ENCODE measurements at regions of chr2 and their contacts with region 1.

Region 1: GRCh38 chr2:234135720-234136221 is 85.3 kb downstream of the SPP2 start:
- DNase-seq: peak; percentile 49 to 86 (median 69)
- H3K4me3 ChIP-seq: no peak overlapping the region
- H3K27ac ChIP-seq: no peak overlapping the region
- H3K4me1 ChIP-seq: no peaks in the 10 kb centered on the region
- H3K27me3 ChIP-seq: peaks cover 3% of the 10 kb centered on the region
- CTCF ChIP-seq: peak; percentile 68 to 89 (median 84)
- POLR2A ChIP-seq: no peak

Region 2: GRCh38 chr2:233745073-233745755 is 390.6 kb before region 1 on chr2:
- intact Hi-C with region 1: no loop called
- DNase-seq: no peak
- H3K4me3 ChIP-seq: no peak overlapping the region
- H3K27ac ChIP-seq: no peak overlapping the region
- H3K4me1 ChIP-seq: no peaks in the 10 kb centered on the region
- H3K27me3 ChIP-seq: no peaks in the 10 kb centered on the region
- CTCF ChIP-seq: no peak
- POLR2A ChIP-seq: no peak

Region 3: DNA sequence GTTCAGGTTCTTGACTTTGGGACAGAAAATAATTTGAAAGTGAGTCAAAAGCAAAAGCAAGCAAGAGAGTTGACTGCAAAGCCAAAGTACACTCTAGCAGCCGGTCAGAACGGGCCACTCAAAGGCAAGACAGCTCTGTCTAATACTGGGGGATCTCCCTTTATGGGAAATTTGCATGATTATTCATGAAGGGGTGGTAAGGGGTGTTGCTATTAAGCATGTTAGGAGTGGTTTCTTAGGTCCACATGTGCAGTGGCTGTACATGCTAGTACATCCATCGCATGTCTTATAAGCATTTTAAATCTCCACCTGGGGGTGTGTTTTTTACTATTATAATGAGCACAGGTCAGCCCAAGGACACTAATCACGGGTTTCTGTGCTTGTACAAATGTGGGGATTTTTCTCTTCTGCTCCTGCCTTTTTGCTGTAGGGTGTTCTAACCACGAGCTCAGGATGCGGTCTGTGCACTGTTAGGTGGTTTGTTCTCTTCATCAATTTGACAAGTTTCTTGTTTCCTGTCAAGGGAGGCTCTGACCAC is 145.4 kb before region 1 on chr2:
- intact Hi-C with region 1: no loop called
- DNase-seq: no peak
- H3K4me3 ChIP-seq: no peak overlapping the region
- H3K27ac ChIP-seq: no peak overlapping the region
- H3K4me1 ChIP-seq: no peaks in the 10 kb centered on the region
- H3K27me3 ChIP-seq: no peaks in the 10 kb centered on the region
- CTCF ChIP-seq: no peak
- POLR2A ChIP-seq: no peak

Region 4: DNA sequence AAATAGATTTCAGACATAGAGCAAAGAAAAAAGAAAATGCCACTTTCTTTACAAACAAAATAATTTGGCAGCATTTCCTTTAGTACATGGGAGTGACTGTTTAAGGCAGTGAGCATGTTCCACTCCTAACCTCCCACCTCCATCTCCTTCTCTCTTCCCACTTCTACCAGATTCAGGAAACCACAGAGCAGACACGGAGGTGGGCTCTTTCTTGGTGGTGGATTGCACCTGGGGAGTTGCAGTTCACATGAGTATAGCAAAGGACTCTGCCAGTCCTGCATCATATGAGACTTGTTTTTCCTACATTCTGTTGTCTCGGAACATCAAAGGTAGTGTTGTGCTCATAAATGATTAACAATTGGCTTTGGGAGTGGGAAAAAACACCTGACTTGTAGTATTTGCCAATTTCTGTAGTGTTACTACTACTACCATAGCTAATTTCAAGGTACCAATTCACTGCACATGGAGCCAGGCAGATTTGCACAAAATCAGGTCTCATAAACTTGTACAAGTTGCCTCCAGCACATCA is 51.9 kb after region 1 on chr2:
- intact Hi-C with region 1: no loop called
- DNase-seq: no peak
- H3K4me3 ChIP-seq: no peak overlapping the region
- H3K27ac ChIP-seq: no peak overlapping the region
- H3K4me1 ChIP-seq: no peaks in the 10 kb centered on the region
- H3K27me3 ChIP-seq: no peaks in the 10 kb centered on the region
- CTCF ChIP-seq: no peak
- POLR2A ChIP-seq: no peak

Region 5: DNA sequence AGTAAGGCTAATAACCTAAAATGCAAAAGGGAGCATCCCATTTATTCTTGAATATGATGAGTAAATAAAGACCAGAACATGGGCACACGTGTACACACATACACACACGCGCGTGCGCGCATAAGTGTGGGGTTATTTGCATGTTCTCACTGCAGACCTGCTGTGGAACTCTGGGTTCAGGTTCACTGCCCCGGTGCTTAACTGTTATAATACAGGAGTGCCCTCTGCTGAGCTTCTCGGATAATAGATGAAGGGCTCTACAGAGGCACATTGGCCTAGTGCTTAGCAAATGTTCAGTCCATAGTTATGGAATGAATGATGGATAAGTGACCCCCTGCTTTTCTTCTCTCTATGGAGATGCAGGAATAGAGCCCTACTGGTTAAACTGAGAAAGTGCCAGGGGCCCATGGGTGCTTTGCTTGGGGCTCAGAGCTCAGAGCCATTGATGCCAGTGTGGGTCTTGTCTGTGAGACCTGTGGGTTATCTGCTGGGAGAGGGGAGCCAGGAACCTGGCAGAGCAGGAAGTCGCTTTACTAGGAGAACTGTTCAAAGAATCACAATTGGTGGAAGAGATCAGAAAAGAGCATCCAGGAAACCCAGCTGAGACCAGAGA is 364.7 kb after region 1 on chr2:
- intact Hi-C with region 1: loop called (anchors 2 to 5 kb)
- DNase-seq: peak; percentile 33 to 78 (median 42)
- H3K4me3 ChIP-seq: no peak overlapping the region
- H3K27ac ChIP-seq: no peak overlapping the region
- H3K4me1 ChIP-seq: no peaks in the 10 kb centered on the region
- H3K27me3 ChIP-seq: peaks cover 8% of the 10 kb centered on the region
- CTCF ChIP-seq: peak; percentile 8 to 65 (median 52)
- POLR2A ChIP-seq: no peak

Region 6: DNA sequence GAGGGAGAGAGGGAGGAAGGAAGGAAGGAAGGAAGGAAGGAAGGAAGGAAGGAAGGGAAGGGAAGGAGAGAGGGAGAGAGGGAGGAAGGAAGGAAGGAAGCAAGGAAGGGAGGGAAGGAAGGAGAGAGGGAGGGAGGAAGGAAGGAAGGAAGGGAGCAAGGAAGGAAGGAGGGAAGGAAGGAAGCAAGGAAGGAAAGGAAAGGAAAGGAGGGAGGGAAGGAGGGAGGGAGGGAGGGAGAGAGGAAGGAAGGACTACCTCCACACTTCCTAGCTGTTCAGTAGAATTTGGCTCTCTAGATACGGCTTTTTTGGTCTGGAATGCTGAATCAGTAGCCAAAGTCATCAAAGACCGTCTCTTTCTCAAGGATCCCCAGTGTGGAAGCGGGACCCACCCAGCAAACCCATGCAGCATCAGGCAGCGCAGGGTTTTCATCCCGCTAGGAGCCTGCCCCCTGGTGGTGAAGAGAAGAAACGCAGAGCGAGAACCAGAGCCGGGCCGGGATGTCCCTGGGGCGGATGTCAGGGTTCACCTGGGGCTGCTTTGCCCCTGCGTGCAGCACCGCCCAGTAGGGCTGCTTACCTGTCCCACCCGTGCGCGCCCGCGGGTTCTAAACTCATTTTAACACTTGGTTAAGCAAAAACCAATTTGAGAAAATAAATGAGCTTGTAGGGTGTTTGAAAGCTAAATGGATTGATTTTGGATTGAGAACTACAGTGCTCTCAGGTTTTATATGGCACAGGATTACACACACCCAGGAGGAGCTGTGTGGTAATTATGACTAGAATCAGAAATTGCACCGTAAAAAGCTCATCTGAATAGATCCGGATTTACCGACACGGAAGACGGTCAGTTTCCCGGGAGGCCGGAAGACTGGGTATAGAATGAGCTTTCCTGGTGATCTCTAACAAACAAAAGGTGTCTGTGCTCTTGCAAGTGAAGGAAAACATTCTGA is 409.2 kb after region 1 on chr2:
- intact Hi-C with region 1: loop called in 1 of 2 experiments (anchors 5 kb)
- DNase-seq: peak; percentile 50 to 87 (median 60)
- H3K4me3 ChIP-seq: no peak overlapping the region
- H3K27ac ChIP-seq: no peak overlapping the region
- H3K4me1 ChIP-seq: no peaks in the 10 kb centered on the region
- H3K27me3 ChIP-seq: peaks cover under 1% of the 10 kb centered on the region
- CTCF ChIP-seq: peak; percentile 61 to 90 (median 84)
- POLR2A ChIP-seq: no peak

Region 7: DNA sequence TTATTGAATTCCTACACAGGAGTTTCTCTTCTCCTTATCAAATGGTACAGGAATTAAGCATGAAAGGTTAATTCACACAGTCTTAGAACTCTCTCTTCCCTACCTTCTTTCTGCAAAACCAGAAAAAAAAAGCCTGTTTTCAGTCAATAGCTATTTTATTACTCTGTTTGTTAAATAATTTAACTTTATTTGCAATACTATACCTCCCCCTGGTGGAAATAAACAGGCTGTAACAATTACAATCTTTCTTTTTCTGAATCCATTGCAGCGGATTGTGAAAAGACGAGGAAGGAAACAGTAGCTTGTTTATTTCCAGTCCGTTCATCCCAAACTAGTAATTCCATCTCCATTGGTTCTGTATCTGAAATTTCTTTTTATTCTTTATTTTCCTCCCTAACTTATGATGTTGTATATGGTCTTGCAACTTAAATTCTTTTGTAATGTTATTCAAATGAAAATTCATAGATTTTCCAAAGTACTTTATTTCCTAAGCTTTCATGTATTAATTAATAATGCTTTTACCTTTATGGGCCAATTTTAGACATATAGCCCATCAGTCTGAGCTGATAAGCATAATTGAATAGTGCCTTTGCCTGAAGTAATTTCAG is 981.2 kb after region 1 on chr2:
- intact Hi-C with region 1: loop called in 1 of 2 experiments (anchors 5 kb)
- DNase-seq: no peak
- H3K4me3 ChIP-seq: no peak overlapping the region
- H3K27ac ChIP-seq: no peak overlapping the region
- H3K4me1 ChIP-seq: no peaks in the 10 kb centered on the region
- H3K27me3 ChIP-seq: no peaks in the 10 kb centered on the region
- CTCF ChIP-seq: peak; percentile 62 to 85 (median 78)
- POLR2A ChIP-seq: no peak